Psoas muscle (tissue), 8 donors: ENCODE measurements at regions of chr7 and their contacts with region 1.

Region 1: GRCh38 chr7:151110941-151111645 is 24.8 kb downstream of the AGAP3 start:
- DNase-seq: peak; percentile 78 to 89
- ATAC-seq: peak; percentile 79 to 93 (median 86)
- H3K4me3 ChIP-seq: no peak overlapping the region
- H3K27ac ChIP-seq: no peak overlapping the region
- H3K4me1 ChIP-seq: no peaks in the 10 kb centered on the region
- H3K27me3 ChIP-seq: no peaks in the 10 kb centered on the region
- CTCF ChIP-seq: peak; percentile 90

Region 2: GRCh38 chr7:150898475-150899011 is 212.6 kb before region 1 on chr7:
- intact Hi-C with region 1: loop called (anchors 1 to 5 kb)
- DNase-seq: peak; percentile 78 to 87
- ATAC-seq: peak; percentile 75 to 90 (median 82)
- H3K4me3 ChIP-seq: no peak overlapping the region
- H3K27ac ChIP-seq: no peak overlapping the region
- H3K4me1 ChIP-seq: no peaks in the 10 kb centered on the region
- H3K27me3 ChIP-seq: peaks cover 0 to 49% (median 8%) of the 10 kb centered on the region in 3 donors
- CTCF ChIP-seq: peak; percentile 95

Region 3: DNA sequence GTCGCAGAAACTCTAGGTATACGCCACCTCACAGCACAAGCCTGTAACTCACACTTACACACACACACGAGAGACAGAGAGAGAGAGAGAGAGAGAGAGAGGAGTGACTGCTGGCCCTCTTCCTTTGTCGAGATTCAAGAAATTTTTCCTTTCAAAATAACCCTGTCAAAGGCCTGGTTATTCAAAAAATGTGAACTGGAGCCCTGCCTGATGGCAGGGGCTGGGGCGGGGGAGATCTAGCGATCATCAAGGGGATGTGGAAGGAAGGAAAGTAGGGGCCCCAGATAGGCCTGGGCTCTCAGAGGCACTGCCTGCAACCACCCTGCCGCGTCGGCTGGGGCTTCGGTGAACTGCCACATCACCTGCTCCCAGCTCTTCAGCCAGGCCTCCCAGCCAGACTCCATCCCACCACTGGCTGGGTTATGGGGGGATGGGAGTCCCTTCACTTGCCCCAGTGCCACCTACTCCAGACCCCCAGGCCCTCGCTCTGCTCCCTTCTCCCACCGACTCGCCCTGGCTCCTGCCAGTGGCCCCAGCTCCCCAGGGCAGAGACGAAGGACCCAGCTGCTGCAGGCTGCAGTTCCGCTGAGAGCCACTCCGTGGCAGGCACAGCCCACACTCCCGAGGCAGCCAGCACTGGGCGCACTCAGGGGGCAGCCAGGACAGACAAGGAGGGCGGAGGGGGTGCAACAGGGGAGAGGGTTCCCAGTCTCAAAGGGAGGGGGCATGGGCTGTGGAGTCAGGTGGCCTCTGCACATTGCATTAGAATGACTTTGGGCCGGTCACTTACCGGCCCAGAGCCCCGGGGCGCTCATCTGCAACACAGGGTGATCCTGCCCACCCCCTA is 148.3 kb before region 1 on chr7:
- intact Hi-C with region 1: no loop called
- DNase-seq: peak in 1 of 2 donors; percentile 31
- ATAC-seq: peak; percentile 77 to 84 (median 80)
- H3K4me3 ChIP-seq: no peak overlapping the region
- H3K27ac ChIP-seq: no peak overlapping the region
- H3K4me1 ChIP-seq: peaks cover 5% of the 10 kb centered on the region
- H3K27me3 ChIP-seq: peaks cover 0 to 16% (median 0%) of the 10 kb centered on the region in 3 donors
- CTCF ChIP-seq: peak; percentile 70

Region 4: DNA sequence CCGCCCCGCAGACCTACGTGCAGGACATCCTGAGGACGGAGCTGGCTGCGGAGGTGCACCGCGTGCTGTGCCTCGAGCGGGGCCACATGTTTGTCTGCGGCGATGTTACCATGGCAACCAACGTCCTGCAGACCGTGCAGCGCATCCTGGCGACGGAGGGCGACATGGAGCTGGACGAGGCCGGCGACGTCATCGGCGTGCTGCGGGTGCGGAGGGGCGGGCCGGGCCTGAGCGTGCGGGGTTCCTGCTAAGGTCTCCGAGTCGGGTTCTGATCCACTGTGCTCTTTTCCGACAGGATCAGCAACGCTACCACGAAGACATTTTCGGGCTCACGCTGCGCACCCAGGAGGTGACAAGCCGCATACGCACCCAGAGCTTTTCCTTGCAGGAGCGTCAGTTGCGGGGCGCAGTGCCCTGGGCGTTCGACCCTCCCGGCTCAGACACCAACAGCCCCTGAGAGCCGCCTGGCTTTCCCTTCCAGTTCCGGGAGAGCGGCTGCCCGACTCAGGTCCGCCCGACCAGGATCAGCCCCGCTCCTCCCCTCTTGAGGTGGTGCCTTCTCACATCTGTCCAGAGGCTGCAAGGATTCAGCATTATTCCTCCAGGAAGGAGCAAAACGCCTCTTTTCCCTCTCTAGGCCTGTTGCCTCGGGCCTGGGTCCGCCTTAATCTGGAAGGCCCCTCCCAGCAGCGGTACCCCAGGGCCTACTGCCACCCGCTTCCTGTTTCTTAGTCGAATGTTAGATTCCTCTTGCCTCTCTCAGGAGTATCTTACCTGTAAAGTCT is 97.2 kb before region 1 on chr7:
- intact Hi-C with region 1: loop called in 1 of 2 experiments (anchors 5 kb)
- DNase-seq: peak; percentile 70 to 84
- ATAC-seq: peak; percentile 7 to 41 (median 18)
- H3K4me3 ChIP-seq: peak overlapping the region; percentile 49
- H3K27ac ChIP-seq: no peak overlapping the region
- H3K4me1 ChIP-seq: peaks cover 8% of the 10 kb centered on the region
- H3K27me3 ChIP-seq: peaks cover 0 to 84% (median 22%) of the 10 kb centered on the region in 3 donors
- CTCF ChIP-seq: no peak

Region 5: DNA sequence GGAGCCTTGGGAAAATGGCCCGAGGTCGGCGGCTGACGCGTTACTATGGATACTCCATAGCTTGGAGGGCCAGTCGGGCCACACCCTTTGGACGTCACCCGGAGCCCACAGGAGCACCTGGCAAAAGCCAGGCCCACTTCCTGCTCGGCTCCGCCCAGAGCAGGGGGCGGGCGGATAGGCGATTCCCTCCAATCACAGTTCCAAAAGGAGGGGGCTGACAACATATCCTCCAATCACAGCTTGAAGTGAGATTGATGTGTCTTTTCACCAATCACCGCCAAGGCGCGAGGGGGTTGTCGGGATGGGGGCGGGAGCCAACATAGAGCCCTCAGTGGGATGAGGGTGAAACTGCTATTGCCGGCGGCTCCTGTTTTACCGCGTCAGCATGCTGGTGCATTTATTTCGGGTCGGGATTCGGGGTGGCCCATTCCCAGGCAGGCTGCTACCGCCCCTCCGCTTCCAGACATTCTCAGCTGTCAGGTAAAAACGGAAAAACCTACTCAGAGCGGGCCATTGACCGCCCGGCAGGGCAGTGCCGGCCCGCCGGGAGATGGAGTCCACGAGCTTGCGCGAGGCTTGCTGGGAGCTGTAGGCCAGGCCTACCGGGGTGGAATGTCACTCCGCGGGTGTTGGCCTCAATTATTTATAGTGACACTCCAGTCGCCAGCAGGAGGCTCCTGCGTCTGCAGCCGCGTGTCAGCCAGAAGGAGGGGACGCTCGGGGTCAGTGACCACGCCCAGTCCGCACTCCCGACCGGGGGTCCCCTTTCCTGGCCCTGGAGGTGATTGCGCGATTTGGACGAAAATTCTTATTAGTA is 82.8 kb before region 1 on chr7 and contains the start of gene ABCB8:
- intact Hi-C with region 1: loop called (anchors 5 kb)
- DNase-seq: peak; percentile 96 to 98
- ATAC-seq: peak; percentile 93 to 96 (median 94)
- H3K4me3 ChIP-seq: peak within 1 kb of the TSS; percentile 82
- H3K27ac ChIP-seq: peak within 1 kb of the TSS; percentile 88
- H3K4me1 ChIP-seq: peaks cover 9% of the 10 kb centered on the region
- H3K27me3 ChIP-seq: no peaks in the 10 kb centered on the region
- CTCF ChIP-seq: peak; percentile 47
- total RNA-seq, gene ABCB8: 13.2 to 20.7 (median 19.2) TPM

Region 6: GRCh38 chr7:151087245-151088018 is 23.7 kb before region 1 on chr7:
- intact Hi-C with region 1: loop called in 1 of 2 experiments (anchors 2 kb)
- DNase-seq: peak; percentile 75 to 82
- ATAC-seq: peak; percentile 63 to 77 (median 70)
- H3K4me3 ChIP-seq: peak overlapping the region; percentile 86
- H3K27ac ChIP-seq: peak overlapping the region; percentile 84
- H3K4me1 ChIP-seq: peaks cover 33% of the 10 kb centered on the region
- H3K27me3 ChIP-seq: no peaks in the 10 kb centered on the region
- CTCF ChIP-seq: peak; percentile 29

Region 7: DNA sequence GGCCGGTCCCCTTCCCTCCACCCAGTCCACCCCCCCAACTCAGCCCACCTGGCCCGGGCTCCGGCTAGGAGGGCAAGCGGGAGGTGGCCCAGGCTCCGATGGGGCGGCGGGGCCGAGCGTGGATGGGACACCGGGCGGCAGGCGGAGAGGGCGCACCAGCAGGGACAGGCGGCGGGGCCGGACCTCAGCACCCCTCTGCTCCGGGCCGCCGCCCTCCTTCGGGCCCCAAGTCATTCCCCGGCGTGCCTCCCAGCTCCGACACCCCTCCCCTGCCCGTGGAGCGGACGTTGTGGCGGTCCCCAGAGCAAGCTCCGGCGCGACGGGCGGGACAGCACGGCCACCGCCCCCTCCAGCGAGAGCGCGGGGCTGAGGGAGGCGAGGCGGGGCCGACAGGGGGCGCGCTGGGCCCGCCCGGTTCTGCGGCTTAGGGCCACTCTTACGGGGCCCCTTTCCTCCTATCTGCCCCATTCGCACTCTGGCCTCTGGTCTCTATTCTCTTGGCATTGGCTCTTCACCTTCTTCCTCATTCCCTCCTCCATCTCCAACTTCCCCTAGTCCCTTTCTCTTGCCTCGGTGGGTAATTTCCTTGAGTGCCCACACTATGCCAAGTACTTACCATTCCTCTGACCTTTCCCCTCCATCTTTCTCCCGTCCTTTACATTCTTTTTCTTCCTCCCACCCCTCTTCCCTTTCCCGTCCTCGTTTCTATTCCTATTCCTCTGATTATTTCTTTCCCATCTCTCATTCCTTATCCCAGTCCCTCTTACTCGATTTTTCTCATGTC is 57.1 kb after region 1 on chr7:
- intact Hi-C with region 1: no loop called
- DNase-seq: peak; percentile 40 to 76
- ATAC-seq: peak; percentile 77 to 85 (median 78)
- H3K4me3 ChIP-seq: peak overlapping the region; percentile 66
- H3K27ac ChIP-seq: no peak overlapping the region
- H3K4me1 ChIP-seq: peaks cover 12% of the 10 kb centered on the region
- H3K27me3 ChIP-seq: peaks cover 0 to 21% (median 0%) of the 10 kb centered on the region in 3 donors
- CTCF ChIP-seq: peak; percentile 72

Region 8: DNA sequence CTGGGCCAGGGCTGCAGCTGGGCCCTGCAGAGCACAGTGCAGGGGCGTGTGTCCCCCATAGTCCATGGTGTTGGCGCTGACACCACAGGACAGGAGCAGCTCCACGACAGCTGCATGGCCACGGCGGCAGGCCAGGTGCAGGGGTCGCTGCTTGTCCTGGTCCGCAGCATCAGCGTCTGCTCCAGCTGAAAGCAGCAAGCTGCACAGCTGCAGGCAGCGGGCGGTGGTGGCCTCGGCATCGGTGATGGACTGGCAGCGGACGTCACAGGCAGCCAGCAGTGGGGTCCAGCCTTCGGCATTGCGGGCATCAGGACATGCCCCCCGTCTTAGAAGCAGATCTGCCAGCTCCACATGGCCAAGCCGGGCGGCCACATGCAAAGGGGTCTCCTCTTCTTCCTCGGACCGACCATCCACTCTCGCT is 69.9 kb after region 1 on chr7:
- intact Hi-C with region 1: no loop called
- DNase-seq: peak in 1 of 2 donors; percentile 50
- ATAC-seq: peak in 1 of 4 donors; percentile 18
- H3K4me3 ChIP-seq: no peak overlapping the region
- H3K27ac ChIP-seq: no peak overlapping the region
- H3K4me1 ChIP-seq: peaks cover 32% of the 10 kb centered on the region
- H3K27me3 ChIP-seq: no peaks in the 10 kb centered on the region
- CTCF ChIP-seq: no peak